ENCODE measurements at regions of chrX and their contacts with region 1.

Region 1: GRCh38 chrX:13747836-13748235 is 13.3 kb downstream of the OFD1 start:
- DNase-seq: no peak
- CTCF ChIP-seq: no peak

Region 2: DNA sequence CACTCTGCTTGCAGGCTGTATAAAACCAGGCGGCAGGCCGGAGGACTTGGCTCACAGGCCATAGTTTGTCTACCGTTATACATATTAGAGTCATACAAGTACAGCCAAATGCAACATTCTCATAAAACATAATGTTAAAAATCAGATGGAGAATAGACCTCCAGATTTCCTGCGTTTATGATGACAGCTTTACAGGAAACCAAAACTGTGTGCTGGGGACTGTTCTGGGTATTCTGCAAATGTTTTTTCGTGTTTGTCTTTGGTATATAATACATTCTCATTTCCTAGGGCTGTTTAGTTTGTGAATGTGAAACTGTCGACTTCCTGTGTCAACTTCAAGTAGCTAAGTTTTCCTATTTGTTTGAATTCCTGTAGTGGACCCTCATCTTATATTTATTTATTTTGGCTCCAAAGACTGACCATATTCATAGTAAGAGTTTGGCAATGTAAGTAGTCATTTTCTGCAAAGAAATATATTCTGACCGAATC is 623.9 kb before region 1 on chrX:
- in situ Hi-C with region 1: no loop called
- DNase-seq: no peak
- CTCF ChIP-seq: no peak

Region 3: GRCh38 chrX:13658602-13659001 is 89.2 kb before region 1 on chrX:
- in situ Hi-C with region 1: loop called (anchors 5 kb)
- DNase-seq: peak; percentile 38
- CTCF ChIP-seq: peak; percentile 44

Region 4: DNA sequence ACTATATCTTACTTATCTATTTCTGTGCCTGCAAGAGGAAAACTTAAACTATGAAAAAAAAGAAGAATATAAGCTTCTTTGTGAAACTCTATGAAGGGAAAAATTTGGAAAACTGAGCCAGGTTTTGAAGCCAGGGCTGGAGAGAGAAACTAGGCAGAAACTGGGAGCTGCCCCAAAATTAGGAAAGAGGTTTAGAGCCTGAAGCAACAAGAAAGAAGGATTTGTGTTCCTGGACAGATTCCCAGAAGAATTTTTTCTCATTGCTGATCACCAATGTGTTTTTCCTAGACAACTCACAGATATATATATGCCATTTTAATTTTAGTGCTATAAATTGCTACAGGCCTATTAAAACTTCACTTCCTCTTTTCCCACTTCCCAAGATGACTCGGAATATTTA is 526.9 kb after region 1 on chrX:
- in situ Hi-C with region 1: no loop called
- DNase-seq: no peak
- CTCF ChIP-seq: no peak

Measured in GM13976 (cell line).